ENCODE measurements at regions of chr11 and their contacts with region 1.

Region 1: GRCh38 chr11:73393479-73394380 is 17.5 kb downstream of the RELT start:
- DNase-seq: peak; percentile 64 to 82
- ATAC-seq: peak; percentile 46 to 71 (median 55)
- H3K4me3 ChIP-seq: no peak overlapping the region
- H3K4me3 Mint-ChIP-seq: no peak overlapping the region
- H3K27ac ChIP-seq: no peak overlapping the region
- H3K27ac Mint-ChIP-seq: peak overlapping the region; percentile 60 to 70
- H3K4me1 ChIP-seq: peaks cover 15% of the 10 kb centered on the region
- H3K4me1 Mint-ChIP-seq: peaks cover 15 to 27% of the 10 kb centered on the region in 2 donors
- H3K27me3 ChIP-seq: no peaks in the 10 kb centered on the region
- H3K27me3 Mint-ChIP-seq: no peaks in the 10 kb centered on the region
- CTCF ChIP-seq: peak; percentile 66

Region 2: GRCh38 chr11:73376160-73376802 is 17.4 kb before region 1 on chr11 and contains the start of gene RELT:
- intact Hi-C with region 1: loop called (anchors 2 kb)
- DNase-seq: peak; percentile 96 to 97
- ATAC-seq: peak; percentile 76 to 90 (median 76)
- H3K4me3 ChIP-seq: peak within 1 kb of the TSS; percentile 69
- H3K4me3 Mint-ChIP-seq: peak within 1 kb of the TSS; percentile 91
- H3K27ac ChIP-seq: peak within 1 kb of the TSS; percentile 89
- H3K27ac Mint-ChIP-seq: peak within 1 kb of the TSS; percentile 91 to 95
- H3K4me1 ChIP-seq: peaks cover 61% of the 10 kb centered on the region
- H3K4me1 Mint-ChIP-seq: peaks cover 14 to 45% of the 10 kb centered on the region in 2 donors
- H3K27me3 ChIP-seq: no peaks in the 10 kb centered on the region
- H3K27me3 Mint-ChIP-seq: no peaks in the 10 kb centered on the region
- CTCF ChIP-seq: peak; percentile 94
- total RNA-seq, gene RELT: 132 to 264 (median 151) TPM